ENCODE measurements at regions of chr13 and their contacts with region 1.

Region 1: GRCh38 chr13:20609145-20609544 is 42.2 kb downstream of the IFT88 start:
- DNase-seq: peak; percentile 94
- ATAC-seq: peak; percentile 95
- H3K4me3 ChIP-seq: no peak overlapping the region
- H3K27ac ChIP-seq: no peak overlapping the region
- H3K4me1 ChIP-seq: peaks cover 8% of the 10 kb centered on the region
- H3K27me3 ChIP-seq: no peaks in the 10 kb centered on the region
- CTCF ChIP-seq: no peak
- POLR2A ChIP-seq: no peak
- RAD21 ChIP-seq: no peak

Region 2: DNA sequence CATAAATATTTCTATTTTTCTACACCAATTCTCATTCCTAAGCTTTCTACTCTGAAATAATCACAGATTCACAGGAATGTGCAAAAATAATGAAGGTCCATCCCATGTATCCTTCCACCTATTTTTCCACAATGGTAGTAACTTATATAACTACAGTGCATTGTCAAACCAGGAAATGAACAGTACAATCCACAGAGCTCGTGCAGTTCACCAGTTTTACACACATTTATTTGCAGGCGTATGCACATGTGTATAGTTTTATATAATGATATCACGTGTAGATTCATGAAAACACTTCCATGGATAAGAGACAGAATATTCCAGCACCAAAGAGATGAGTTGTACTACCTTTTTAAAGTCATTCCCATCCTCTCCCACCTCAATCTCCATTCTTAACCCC is 151.7 kb after region 1 on chr13:
- CTCF ChIA-PET with region 1: no interaction called
- POLR2A ChIA-PET with region 1: interaction called, 10 read pairs
- dilution Hi-C with region 1: no loop called
- in situ Hi-C with region 1: no loop called
- intact Hi-C with region 1: no loop called
- DNase-seq: no peak
- ATAC-seq: no peak
- H3K4me3 ChIP-seq: no peak overlapping the region
- H3K27ac ChIP-seq: no peak overlapping the region
- H3K4me1 ChIP-seq: no peaks in the 10 kb centered on the region
- H3K27me3 ChIP-seq: no peaks in the 10 kb centered on the region
- CTCF ChIP-seq: no peak
- POLR2A ChIP-seq: no peak
- RAD21 ChIP-seq: no peak

Measured in IMR-90 (cell line).